Heart right ventricle (tissue), 16 donors: ENCODE measurements at regions of chr3 and their contacts with region 1.

Region 1: DNA sequence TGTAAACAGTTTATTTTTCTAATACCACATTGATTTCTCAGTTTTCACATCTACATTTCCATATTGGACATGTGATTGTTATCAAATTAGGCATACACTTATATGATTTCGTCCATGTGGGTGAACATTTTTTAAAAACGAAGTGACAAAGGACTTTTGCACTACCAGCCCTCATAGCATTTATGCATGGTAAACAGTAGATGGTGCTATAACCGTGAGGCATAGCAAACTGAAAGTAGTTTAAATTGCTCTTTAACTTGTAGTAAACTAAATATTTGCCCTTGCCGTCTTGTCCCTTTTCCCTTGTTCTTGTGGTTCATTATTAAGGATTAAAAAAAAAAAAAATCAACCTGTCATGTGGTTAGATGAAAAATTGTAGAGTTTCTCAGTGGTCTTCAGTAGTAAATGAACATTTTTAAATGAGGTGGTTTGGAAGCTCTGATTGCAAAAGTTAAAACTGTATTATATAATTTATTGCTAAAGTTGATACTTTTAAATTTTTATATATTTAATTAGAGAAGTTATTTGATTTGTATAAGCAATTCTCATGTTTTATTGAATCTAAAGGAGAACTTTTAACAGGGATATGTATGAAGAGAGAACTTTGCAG is 24.0 kb downstream of the STX19 start:
- DNase-seq: no peak
- ATAC-seq: peak in 7 of 8 donors; percentile 58 to 78 (median 67)
- H3K4me3 ChIP-seq: peak overlapping the region in 8 of 10 donors; percentile 1 to 46 (median 30)
- H3K27ac ChIP-seq: peak overlapping the region in 3 of 10 donors; percentile 35 to 49 (median 43)
- H3K4me1 ChIP-seq: peaks cover 0 to 14% (median 0%) of the 10 kb centered on the region in 9 donors
- H3K27me3 ChIP-seq: no peaks in the 10 kb centered on the region
- CTCF ChIP-seq: peak; percentile 47 to 91 (median 79)

Region 2: DNA sequence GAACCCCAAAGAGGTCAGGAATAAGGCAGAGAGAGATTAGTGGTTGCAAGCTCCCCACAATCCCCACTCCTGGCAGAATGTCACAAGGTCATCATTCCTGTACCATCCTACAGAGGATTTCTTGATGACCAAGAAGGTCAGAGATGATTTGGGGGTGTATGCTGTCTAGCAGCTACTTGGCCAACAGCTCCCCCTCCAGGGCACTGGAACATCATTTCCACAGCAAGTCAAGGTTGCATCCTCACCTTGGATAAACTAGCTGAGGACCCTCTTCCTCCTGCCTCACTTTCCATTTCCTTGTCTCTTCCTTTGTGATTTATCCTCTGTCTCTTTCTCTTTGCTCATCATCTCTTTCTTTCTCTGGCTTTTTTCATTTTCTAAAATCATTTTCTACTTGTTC is 137.0 kb before region 1 on chr3:
- intact Hi-C with region 1: no loop called
- DNase-seq: no peak
- ATAC-seq: no peak
- H3K4me3 ChIP-seq: no peak overlapping the region
- H3K27ac ChIP-seq: no peak overlapping the region
- H3K4me1 ChIP-seq: no peaks in the 10 kb centered on the region
- H3K27me3 ChIP-seq: no peaks in the 10 kb centered on the region
- CTCF ChIP-seq: no peak

Region 3: DNA sequence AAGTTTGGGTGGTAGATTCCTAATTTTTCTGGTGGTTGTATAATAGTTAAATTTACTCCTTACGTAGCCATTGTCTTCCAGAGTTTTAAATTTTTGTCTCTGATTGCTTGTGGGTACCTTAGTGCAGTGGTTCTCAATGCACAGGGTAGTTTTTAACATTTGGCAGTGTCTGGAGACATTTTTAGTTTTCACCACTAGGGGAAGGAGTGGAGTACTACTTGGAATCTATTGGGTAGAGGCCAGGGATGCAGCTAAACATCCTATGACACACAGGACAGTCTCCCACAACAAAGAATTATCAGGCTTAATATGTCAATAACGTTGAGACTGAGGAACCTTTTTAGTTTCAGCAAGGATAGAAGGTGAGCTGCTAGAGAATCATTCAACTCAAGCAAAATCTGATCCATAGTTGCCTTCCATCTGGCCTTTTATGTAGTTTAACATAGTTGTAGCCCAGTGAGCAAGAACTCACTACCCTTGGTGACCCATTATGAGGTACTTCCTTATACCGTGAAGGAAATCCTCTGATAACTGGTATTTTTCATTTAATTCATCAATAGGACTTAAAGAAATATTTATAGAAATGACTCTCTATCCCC is 32.6 kb after region 1 on chr3:
- intact Hi-C with region 1: loop called in 1 of 10 experiments (anchors 1 kb)
- DNase-seq: no peak
- ATAC-seq: no peak
- H3K4me3 ChIP-seq: no peak overlapping the region
- H3K27ac ChIP-seq: no peak overlapping the region
- H3K4me1 ChIP-seq: no peaks in the 10 kb centered on the region
- H3K27me3 ChIP-seq: no peaks in the 10 kb centered on the region
- CTCF ChIP-seq: peak in 7 of 9 donors; percentile 25 to 53 (median 46)

Region 4: GRCh38 chr3:94062431-94063404 is 58.3 kb after region 1 on chr3 and contains the starts of genes DHFR2 and NSUN3:
- intact Hi-C with region 1: loop called in 6 of 10 experiments (anchors 2 to 10 kb)
- DNase-seq: peak; percentile 89 to 93
- ATAC-seq: peak; percentile 91 to 98 (median 98)
- H3K4me3 ChIP-seq: peak within 1 kb of the TSS; percentile 42 to 83 (median 68)
- H3K27ac ChIP-seq: peak within 1 kb of the TSS; percentile 65 to 98 (median 90)
- H3K4me1 ChIP-seq: peaks cover 0 to 44% (median 22%) of the 10 kb centered on the region in 9 donors
- H3K27me3 ChIP-seq: no peaks in the 10 kb centered on the region
- CTCF ChIP-seq: no peak
- total RNA-seq, gene DHFR2: 2.6 to 4.9 (median 3.0) TPM
- total RNA-seq, gene NSUN3: 5.9 to 9.6 (median 7.1) TPM

Region 5: DNA sequence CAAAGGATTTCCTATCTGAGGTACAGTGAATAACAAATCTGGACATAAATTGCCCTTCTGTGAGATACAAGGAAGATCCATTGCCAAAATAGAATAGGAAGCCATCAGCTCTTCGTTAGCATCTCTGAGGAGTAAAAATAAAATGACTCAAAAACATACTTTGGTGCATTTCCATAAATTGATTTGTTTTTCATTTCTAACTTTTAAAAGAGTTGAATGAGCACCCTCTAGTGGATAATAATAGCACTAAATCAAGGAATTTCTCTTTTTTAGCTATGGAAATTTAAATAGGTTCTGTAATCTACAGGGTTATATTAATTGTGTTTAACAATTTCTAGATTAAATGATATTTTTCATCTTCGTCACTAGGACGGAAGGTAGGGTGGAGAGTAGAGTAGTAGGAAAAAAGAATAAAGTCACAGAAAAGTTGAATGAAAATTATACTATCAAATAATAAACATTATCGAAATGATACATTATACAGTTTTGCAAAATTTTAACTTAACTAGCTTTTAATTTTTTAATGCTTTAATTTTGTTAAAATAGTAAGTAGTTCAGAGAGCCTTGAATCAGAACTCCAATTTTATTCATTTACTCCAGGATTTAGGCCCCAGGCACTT is 64.9 kb after region 1 on chr3:
- intact Hi-C with region 1: loop called (anchors 1 to 10 kb)
- DNase-seq: no peak
- ATAC-seq: peak in 1 of 8 donors; percentile 17
- H3K4me3 ChIP-seq: no peak overlapping the region
- H3K27ac ChIP-seq: no peak overlapping the region
- H3K4me1 ChIP-seq: peaks cover 0 to 32% (median 7%) of the 10 kb centered on the region in 9 donors
- H3K27me3 ChIP-seq: no peaks in the 10 kb centered on the region
- CTCF ChIP-seq: peak; percentile 30 to 78 (median 64)

Region 6: DNA sequence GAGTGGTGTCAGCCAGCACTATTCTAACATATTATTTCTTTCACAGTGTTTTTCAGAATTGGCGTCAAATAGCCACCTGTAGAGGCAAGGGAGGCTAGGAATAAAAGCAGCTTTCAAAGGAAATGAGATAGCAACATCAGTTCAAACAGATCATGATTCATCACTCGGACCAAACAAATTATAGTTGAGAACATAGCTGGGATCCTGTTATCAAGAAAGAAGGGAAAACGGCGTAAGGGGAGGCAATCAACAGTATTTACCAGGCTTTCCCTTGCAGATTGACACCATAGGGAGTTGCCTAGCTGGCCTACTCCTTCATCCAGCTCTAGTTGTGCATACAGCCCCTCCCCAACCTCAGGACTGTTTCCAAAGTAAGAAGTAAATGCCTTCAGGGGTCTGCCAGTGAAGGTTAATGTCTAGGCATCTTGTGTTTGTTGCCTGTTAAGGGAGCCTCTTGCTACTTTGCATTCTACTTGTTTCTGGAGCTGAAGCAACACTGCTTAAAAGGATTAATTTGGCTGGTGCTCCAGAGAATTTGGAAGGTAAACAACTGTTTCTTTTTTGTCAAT is 345.0 kb after region 1 on chr3:
- intact Hi-C with region 1: no loop called
- DNase-seq: no peak
- ATAC-seq: no peak
- H3K4me3 ChIP-seq: no peak overlapping the region
- H3K27ac ChIP-seq: no peak overlapping the region
- H3K4me1 ChIP-seq: no peaks in the 10 kb centered on the region
- H3K27me3 ChIP-seq: no peaks in the 10 kb centered on the region
- CTCF ChIP-seq: no peak